Activated T-helper 1 cell treated with anti-CD3 and anti-CD28 coated beads, Interleukin-12 subunit alpha, Interleukin-12 subunit beta, Interleukin-2, Interleukin-4 antibody, amounts not matched to agents 30 ng/mL and 10 ng/mL and 1 ng/mL, durations not matched to agents 14 hours and 24 hours and 36 hours (primary cell): ENCODE measurements at regions of chrX and their contacts with region 1.

Region 1: GRCh38 chrX:139932901-139933796 is at the start of gene ATP11C:
- DNase-seq: peak; percentile 68
- H3K4me3 Mint-ChIP-seq: peak within 1 kb of the TSS; percentile 84
- H3K27ac Mint-ChIP-seq: peak within 1 kb of the TSS; percentile 94
- H3K4me1 Mint-ChIP-seq: peaks cover 19% of the 10 kb centered on the region
- H3K27me3 Mint-ChIP-seq: no peaks in the 10 kb centered on the region
- total RNA-seq, gene ATP11C: 17.7 and 18.3 TPM in 2 replicates

Region 2: DNA sequence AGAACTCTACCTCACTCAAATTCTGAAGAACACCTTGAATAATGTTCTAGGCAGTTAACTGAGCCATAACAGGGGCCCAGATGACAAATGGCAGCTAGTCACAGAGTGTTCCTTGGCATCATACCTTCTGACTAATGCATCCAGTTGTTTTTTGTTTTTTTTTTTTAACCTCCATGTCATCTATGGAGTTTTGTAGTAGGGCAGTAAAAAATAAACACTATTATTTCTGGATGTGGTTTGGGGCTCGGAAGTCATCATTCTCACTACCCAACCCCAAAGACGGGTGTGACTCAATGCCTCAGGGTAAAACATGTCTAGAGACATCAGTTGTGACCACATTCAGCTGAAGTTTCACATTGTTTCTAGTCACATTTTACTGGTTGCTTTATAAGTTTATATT is 194.0 kb before region 1 on chrX:
- intact Hi-C with region 1: loop called (anchors 2 kb)
- DNase-seq: no peak
- H3K4me3 Mint-ChIP-seq: peak overlapping the region; percentile 46
- H3K27ac Mint-ChIP-seq: peak overlapping the region; percentile 69
- H3K4me1 Mint-ChIP-seq: peaks cover 20% of the 10 kb centered on the region
- H3K27me3 Mint-ChIP-seq: no peaks in the 10 kb centered on the region

Region 3: GRCh38 chrX:139784807-139785206 is 148.3 kb before region 1 on chrX:
- intact Hi-C with region 1: no loop called
- DNase-seq: no peak
- H3K4me3 Mint-ChIP-seq: no peak overlapping the region
- H3K27ac Mint-ChIP-seq: no peak overlapping the region
- H3K4me1 Mint-ChIP-seq: peaks cover 6% of the 10 kb centered on the region
- H3K27me3 Mint-ChIP-seq: no peaks in the 10 kb centered on the region

Region 4: DNA sequence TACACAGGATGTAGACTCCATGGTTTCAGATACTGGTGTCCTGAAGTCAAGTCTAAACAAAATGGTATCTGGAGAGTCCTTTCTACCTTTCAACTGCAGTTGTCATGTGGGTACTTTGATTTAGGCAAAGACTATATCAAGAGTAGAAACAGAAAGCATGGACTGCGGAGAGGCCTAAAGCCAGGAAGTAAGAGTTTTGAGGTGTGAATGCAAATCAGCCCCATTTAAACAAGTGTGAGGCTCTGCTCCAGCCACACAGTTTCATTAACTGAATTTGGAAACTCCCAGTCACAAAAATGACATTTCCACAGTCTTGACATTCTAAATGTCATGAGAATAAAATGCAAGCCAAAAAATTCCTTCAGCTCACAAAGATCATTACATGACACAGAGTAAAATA is 138.0 kb before region 1 on chrX:
- intact Hi-C with region 1: loop called (anchors 1 kb)
- DNase-seq: peak; percentile 0
- H3K4me3 Mint-ChIP-seq: peak overlapping the region; percentile 39
- H3K27ac Mint-ChIP-seq: peak overlapping the region; percentile 56
- H3K4me1 Mint-ChIP-seq: peaks cover 22% of the 10 kb centered on the region
- H3K27me3 Mint-ChIP-seq: no peaks in the 10 kb centered on the region

Region 5: DNA sequence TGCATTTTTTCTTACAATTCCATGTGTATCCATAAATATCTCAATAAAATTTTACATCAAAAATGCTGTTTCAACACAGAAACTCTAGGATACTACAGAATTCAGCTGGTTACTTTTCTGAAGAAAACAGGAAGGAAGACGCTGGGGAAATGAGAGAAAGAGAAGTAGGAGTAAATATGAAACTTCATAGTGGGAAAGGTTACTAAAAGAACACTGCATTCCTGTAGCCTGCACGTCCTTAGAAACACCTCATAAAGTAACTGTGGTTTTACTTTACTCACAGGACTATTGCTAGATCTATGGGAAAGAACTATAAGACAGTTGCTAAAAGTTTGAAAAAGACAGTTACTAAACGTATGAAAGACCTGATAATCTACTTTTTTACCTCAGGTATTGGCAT is 23.4 kb before region 1 on chrX:
- intact Hi-C with region 1: loop called (anchors 1 kb)
- DNase-seq: no peak
- H3K4me3 Mint-ChIP-seq: peak overlapping the region; percentile 42
- H3K27ac Mint-ChIP-seq: no peak overlapping the region
- H3K4me1 Mint-ChIP-seq: peaks cover 30% of the 10 kb centered on the region
- H3K27me3 Mint-ChIP-seq: no peaks in the 10 kb centered on the region